ENCODE measurements at regions of chr11 and their contacts with region 1.

Region 1: GRCh38 chr11:62794201-62794775 is 2.5 kb upstream of the TMEM223 start:
- DNase-seq: no peak
- ATAC-seq: no peak
- H3K4me3 ChIP-seq: no peak overlapping the region
- H3K27ac ChIP-seq: no peak overlapping the region
- H3K4me1 ChIP-seq: peaks cover 13% of the 10 kb centered on the region
- H3K27me3 ChIP-seq: no peaks in the 10 kb centered on the region
- CTCF ChIP-seq: no peak

Region 2: GRCh38 chr11:62816557-62816956 is 22.3 kb after region 1 on chr11:
- intact Hi-C with region 1: loop called in 1 of 2 experiments (anchors 2 kb)
- DNase-seq: no peak
- ATAC-seq: no peak
- H3K4me3 ChIP-seq: no peak overlapping the region
- H3K27ac ChIP-seq: no peak overlapping the region
- H3K4me1 ChIP-seq: no peaks in the 10 kb centered on the region
- H3K27me3 ChIP-seq: no peaks in the 10 kb centered on the region
- CTCF ChIP-seq: no peak

Measured in psoas muscle (tissue), 8 donors.